Right cardiac atrium (tissue), 5 donors: ENCODE measurements at regions of chr20 and their contacts with region 1.

Region 1: DNA sequence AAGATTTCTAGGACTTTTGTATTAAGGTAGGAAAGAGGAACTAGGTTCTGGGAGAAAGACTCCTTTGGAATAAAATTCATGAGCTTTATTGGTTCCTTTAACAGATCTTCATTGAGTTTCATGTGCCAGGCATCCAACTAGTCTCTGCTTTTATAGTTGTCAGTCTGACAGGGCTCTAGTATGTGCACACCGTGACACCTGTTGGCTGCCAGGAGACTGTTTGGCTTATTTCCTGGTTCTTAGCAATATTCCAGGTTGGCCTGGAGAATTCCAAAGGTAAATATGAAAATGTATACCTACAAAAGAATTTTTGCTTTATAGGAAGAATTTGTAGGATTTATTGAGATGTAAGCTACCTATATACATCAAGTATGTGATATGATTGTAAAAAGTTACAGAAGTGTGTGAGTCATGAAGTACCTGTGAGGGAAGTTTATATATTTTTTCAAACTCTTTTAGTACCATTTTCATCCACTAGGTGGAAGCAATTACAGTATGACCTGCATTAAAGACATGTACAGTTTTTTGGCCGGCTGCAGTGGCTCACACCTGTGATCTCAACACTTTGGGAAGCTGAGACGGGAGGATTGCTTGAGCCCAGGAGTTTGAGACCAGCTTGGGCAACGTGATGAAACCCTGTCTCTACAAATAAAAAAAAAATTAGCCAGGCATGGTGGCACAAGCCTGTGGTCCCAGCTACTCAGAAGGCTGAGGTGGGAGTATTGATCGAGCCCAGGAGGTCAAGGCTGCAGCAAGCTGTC is 35.2 kb downstream of the NDUFAF5 start:
- DNase-seq: peak; percentile 18 to 43 (median 39)
- ATAC-seq: peak; percentile 39 to 58
- H3K4me3 ChIP-seq: no peak overlapping the region
- H3K27ac ChIP-seq: no peak overlapping the region
- H3K4me1 ChIP-seq: peaks cover 4% of the 10 kb centered on the region
- H3K27me3 ChIP-seq: no peaks in the 10 kb centered on the region

Region 2: DNA sequence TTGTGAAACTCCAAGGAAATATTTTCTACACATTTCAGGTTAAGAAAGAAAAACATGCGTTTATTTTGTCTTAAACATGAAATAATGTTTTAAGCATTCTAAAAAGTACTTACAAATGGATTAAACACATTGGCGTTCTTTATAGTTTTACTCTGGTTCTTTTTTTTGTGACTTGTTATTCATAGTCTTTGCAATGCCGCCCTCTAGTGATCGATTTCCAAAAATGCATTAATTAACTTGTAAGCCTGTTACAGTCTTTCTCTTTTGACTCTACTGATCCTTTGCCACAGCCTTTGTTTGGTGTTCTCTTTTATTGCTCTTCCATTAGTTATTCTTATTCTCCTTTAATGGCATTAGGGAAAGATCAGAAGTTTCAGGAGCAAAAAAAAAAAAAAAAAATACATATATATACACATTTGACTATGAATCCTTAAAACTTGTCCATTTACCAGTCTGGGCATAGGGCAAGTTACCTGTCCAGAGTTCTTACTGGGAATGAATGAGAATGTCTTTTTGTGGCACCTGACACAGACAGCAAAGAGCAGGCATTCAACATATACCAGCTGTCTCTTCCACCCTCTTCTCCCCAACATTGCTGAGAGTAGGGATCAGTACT is 235.2 kb after region 1 on chr20:
- intact Hi-C with region 1: loop called (anchors 2 to 5 kb)
- DNase-seq: no peak
- ATAC-seq: no peak
- H3K4me3 ChIP-seq: no peak overlapping the region
- H3K27ac ChIP-seq: no peak overlapping the region
- H3K4me1 ChIP-seq: no peaks in the 10 kb centered on the region
- H3K27me3 ChIP-seq: no peaks in the 10 kb centered on the region